ENCODE measurements at regions of chr5 and their contacts with region 1.

Region 1: DNA sequence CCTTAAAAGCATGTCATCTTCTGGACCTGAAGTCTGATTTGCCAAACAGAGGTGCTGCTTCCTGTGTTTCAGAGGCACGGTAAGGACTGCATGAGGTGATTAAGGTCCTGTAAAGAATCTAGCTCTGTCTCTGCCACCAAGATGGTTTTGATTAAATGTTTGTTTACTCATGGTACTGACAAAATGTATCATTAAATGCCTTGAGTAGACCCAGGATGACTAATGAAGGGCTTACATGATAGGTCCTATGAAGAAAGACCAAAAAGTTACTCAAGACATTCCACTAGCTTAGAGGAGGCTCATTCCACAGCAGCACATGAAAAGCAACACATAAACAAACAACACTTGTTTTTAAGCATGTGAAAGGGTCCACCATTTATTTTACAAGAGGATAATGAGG is 100.9 kb downstream of the BOD1 start:
- DNase-seq: peak in 1 of 2 experiments; percentile 93
- H3K4me3 ChIP-seq: no peak overlapping the region
- H3K27ac ChIP-seq: peak overlapping the region; percentile 94
- H3K4me1 ChIP-seq: peaks cover 42% of the 10 kb centered on the region
- H3K27me3 ChIP-seq: no peaks in the 10 kb centered on the region
- CTCF ChIP-seq: no peak

Region 2: GRCh38 chr5:173391031-173391430 is 124.5 kb before region 1 on chr5:
- CTCF ChIA-PET with region 1: no interaction called
- POLR2A ChIA-PET with region 1: no interaction called
- intact Hi-C with region 1: no loop called
- DNase-seq: no peak
- H3K4me3 ChIP-seq: no peak overlapping the region
- H3K27ac ChIP-seq: no peak overlapping the region
- H3K4me1 ChIP-seq: peaks cover 6% of the 10 kb centered on the region
- H3K27me3 ChIP-seq: no peaks in the 10 kb centered on the region
- CTCF ChIP-seq: no peak

Region 3: GRCh38 chr5:173454754-173455614 is 60.5 kb before region 1 on chr5:
- CTCF ChIA-PET with region 1: no interaction called
- POLR2A ChIA-PET with region 1: interaction called, 3 read pairs
- intact Hi-C with region 1: loop called (anchors 5 kb)
- DNase-seq: peak; percentile 80 to 98
- H3K4me3 ChIP-seq: peak overlapping the region; percentile 11; the same call in 1 of the 2 replicates
- H3K27ac ChIP-seq: peak overlapping the region; percentile 100
- H3K4me1 ChIP-seq: peaks cover 89% of the 10 kb centered on the region
- H3K27me3 ChIP-seq: no peaks in the 10 kb centered on the region
- CTCF ChIP-seq: peak; percentile 7; the same call in 1 of the 2 replicates

Region 4: GRCh38 chr5:173493040-173493439 is 22.5 kb before region 1 on chr5:
- CTCF ChIA-PET with region 1: interaction called, 12 read pairs
- POLR2A ChIA-PET with region 1: no interaction called
- intact Hi-C with region 1: no loop called
- DNase-seq: no peak
- H3K4me3 ChIP-seq: no peak overlapping the region
- H3K27ac ChIP-seq: no peak overlapping the region
- H3K4me1 ChIP-seq: peaks cover 17% of the 10 kb centered on the region
- H3K27me3 ChIP-seq: no peaks in the 10 kb centered on the region
- CTCF ChIP-seq: no peak

Region 5: GRCh38 chr5:173530547-173530946 is 15.0 kb after region 1 on chr5:
- CTCF ChIA-PET with region 1: no interaction called
- POLR2A ChIA-PET with region 1: no interaction called
- intact Hi-C with region 1: no loop called
- DNase-seq: no peak
- H3K4me3 ChIP-seq: no peak overlapping the region
- H3K27ac ChIP-seq: no peak overlapping the region
- H3K4me1 ChIP-seq: 0 out of 2 replicates have a peak, but pooled peaks cover 2% of the 10 kb centered on the region
- H3K27me3 ChIP-seq: no peaks in the 10 kb centered on the region
- CTCF ChIP-seq: no peak; the same call in 1 of the 2 replicates

Region 6: DNA sequence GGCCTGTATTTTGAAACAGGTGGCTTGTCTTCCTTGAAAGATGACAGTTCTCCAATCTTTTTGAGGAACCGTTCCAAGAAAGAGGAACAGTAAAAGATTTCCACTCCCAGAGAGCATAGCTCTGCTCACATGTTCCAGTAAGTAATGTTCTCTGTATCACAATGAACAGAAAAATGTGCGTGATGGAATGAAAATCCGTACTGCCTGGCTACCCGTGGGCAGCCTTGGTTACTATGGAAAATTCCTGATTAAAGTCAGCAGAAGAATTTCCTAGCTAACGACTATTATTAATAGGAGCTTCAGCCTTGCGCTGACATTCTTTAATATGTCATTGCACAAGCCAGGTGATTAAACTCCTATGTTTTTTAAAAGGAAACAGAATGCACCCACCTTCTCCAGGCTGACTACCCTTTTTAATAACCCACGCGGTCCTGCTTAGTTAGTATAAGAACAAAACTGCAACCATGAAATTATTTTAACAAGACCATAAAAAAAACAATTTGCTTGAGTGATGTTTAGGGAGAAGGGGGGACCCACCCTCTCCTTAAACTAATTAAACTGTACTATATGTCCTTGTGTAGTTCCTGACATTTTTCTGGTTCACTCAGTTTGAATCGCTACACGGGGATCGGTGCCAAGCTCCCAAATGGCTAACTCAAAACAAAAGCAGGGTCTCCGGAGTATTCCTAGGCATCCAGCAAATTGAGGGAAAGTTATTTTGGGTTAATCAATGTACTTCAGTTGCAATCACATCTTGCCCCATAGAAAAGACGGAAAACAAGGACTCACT is 317.9 kb after region 1 on chr5:
- CTCF ChIA-PET with region 1: no interaction called
- POLR2A ChIA-PET with region 1: no interaction called
- intact Hi-C with region 1: no loop called
- DNase-seq: no peak
- H3K4me3 ChIP-seq: no peak overlapping the region
- H3K27ac ChIP-seq: no peak overlapping the region
- H3K4me1 ChIP-seq: peaks cover 28% of the 10 kb centered on the region
- H3K27me3 ChIP-seq: no peaks in the 10 kb centered on the region
- CTCF ChIP-seq: no peak